Dendritic cell treated with granulocyte-macrophage colony-stimulating factor and Interleukin-4, amounts not matched to agents 40 ng/mL and 50 ng/mL, for 4 days (primary cell): ENCODE measurements at regions of chr11 and their contacts with region 1.

Region 1: DNA sequence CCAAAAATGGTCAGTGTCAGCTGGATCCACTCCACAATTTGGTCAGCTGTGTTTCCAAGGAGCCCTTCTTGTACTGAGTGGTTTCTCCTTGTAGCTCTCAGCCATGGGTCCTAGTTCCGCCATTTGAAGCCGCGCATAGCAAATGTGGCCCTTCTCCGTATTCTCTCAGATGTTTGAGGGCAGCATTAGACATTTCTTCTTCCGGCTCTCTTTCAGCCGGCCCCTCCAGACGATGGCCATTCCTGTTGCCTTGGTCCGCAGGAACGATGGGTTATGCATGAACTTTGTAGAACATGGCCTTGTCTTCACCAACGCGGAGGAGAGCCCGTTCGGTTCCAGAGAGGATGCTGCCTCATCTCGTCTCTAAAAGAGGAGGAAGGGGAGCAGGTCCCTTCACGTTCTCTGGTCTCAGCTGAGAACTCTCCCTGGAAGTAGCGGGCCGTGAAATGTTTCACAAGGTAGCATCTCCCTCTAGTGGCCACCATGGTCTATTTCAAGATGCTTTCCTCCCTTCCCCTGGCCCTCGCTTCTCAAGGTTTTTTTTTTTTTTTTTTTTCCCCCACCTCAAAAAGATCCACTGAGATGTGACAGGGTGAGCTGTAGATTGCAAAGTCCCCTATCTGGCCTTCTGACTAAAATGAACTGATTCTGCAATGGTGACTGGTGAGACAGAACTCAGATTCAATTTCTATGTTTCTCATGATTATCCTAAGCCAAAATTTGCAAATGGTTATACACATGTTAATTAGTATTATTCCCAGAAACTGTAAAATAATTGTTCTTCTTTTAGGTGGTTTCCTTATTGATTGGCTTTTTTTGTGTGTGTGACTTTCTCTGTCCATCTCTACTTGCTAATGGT is 19.8 kb upstream of the PLET1 start:
- H3K4me3 Mint-ChIP-seq: peak overlapping the region; percentile 82
- H3K27ac Mint-ChIP-seq: peak overlapping the region; percentile 66
- H3K4me1 Mint-ChIP-seq: peaks cover 32% of the 10 kb centered on the region
- H3K27me3 Mint-ChIP-seq: peaks cover 2% of the 10 kb centered on the region

Region 2: DNA sequence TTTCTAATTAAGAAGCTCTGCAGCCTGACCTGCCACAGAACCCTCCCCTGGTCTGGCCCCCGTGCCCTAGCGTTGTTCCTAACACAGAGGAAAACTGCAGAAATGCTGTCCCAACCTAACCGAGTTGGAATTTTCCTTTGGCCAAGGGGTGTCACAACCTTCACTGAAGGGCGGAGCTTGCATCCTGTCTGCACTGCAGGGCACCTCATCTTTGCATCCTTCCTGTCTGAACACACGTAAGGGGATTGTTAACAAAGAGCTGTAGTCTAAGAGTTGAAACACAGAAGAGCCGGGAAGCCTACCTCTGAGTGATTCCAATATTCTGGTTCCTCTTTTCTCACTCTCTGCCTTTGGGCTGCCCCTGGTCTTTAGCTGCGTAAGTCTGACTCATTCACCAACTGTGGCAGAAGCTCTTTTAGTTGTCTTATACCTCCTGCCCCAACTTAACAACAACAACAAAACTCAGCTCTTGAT is 341.8 kb before region 1 on chr11:
- intact Hi-C with region 1: loop called (anchors 2 kb)
- H3K4me3 Mint-ChIP-seq: no peak overlapping the region
- H3K27ac Mint-ChIP-seq: peak overlapping the region; percentile 55
- H3K4me1 Mint-ChIP-seq: peaks cover 43% of the 10 kb centered on the region
- H3K27me3 Mint-ChIP-seq: peaks cover 9% of the 10 kb centered on the region

Region 3: DNA sequence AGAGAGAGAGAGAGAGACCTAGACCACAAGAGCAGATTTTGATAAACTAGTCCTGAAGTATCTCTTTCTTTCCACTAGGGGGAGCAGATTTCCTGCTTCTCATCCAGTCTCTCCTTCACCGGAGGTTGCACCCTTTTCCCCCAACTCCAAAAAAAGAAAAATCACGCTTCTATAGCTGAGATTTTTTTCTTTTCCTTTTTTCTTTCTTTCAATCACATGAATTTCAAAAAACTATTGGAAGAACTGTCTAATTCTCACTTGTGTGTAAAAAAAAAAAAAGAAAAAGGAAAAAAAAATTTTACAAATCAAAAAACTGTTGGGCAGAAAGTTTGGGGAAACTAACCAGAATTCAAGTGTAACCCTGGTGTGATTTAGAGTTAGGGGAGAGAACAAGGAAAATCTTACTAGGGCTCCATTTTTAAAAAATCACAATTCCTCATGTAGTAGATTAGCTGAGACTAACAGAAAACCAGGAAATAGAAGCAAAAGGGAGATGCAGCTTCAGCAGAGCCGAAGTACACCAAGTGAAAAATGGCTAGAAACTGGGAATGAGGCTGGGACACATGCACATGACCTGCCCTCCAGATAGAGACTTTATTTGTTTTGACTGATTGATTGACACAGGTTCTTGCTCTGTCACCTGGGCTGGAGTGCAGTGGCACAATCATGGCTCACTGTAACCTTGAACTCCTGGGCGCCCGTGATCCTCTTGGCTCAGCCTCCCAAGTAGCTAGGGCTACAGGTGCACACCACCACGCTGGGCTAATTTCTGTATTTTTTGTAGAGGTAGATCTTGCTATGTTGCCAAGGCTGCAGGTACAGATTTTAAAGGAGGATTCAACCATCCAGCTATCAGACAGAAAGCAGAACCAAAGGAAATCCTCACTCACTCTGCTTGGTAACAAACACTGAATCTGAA is 166.7 kb before region 1 on chr11:
- intact Hi-C with region 1: loop called (anchors 5 kb)
- H3K4me3 Mint-ChIP-seq: peak overlapping the region; percentile 23
- H3K27ac Mint-ChIP-seq: peak overlapping the region; percentile 74
- H3K4me1 Mint-ChIP-seq: no peaks in the 10 kb centered on the region
- H3K27me3 Mint-ChIP-seq: no peaks in the 10 kb centered on the region

Region 4: DNA sequence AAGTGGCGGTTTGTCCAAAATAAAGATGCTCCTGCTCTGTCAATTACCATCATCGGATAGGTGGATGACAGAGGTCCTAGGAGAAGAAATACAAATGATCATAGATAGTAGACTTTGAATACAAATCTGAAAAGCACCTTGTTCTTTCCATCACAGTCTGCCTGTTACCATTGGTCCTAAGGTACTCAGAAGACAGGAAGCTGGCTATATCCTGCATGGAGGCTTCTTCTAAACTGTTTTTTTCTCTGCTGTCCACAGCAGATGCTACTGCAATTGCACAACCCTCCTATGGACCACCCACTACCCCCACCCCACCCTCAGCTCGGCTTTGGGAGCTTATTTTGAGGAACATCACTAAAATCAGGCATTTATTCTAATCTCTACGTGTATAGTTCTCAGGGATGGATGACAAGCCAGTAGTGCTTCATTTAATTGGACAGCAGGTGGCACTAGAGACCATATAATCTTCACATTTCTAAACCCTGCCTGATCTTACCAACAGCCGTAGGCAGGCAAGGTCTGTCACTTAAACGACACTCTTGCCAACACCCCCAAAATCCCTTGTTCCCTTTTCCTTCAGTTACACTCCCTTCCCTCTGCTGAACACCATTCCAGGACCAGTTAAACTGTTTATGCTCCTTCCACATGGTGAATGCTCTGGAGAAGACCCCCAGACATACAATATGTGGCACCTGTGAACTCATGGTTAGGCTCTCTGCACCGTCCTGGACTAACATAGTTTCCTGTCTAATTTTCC is 60.8 kb before region 1 on chr11:
- intact Hi-C with region 1: loop called (anchors 1 kb)
- H3K4me3 Mint-ChIP-seq: no peak overlapping the region
- H3K27ac Mint-ChIP-seq: peak overlapping the region; percentile 45
- H3K4me1 Mint-ChIP-seq: peaks cover 13% of the 10 kb centered on the region
- H3K27me3 Mint-ChIP-seq: no peaks in the 10 kb centered on the region

Region 5: DNA sequence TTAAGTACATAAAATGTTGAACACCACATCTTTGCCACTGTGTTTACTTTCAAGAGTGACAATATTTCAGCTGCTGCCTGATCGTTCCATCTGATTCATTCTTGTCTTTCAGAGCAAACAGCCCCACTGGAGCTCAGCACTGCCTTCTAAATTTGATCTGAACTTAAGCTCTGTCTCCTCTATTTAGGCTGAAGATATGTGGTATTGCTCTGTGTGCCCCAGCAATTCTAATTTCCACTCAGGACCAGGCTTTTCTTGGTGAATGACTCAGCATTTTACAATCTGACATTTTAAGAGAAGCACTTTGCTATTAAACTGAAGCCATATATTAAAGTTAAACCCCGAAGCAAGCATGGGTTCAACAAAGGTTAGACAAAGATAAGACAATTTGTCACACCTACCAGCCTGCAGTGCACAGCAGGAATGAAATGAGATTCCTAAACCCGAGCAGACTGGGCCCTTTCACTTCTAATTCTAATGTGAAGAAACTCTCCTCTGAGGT is 21.8 kb after region 1 on chr11:
- intact Hi-C with region 1: no loop called
- H3K4me3 Mint-ChIP-seq: no peak overlapping the region
- H3K27ac Mint-ChIP-seq: no peak overlapping the region
- H3K4me1 Mint-ChIP-seq: peaks cover 8% of the 10 kb centered on the region
- H3K27me3 Mint-ChIP-seq: no peaks in the 10 kb centered on the region